AG04449 (cell line): ENCODE measurements at regions of chr19 and their contacts with region 1.

Region 1: GRCh38 chr19:12983542-12984142 is 11.6 kb upstream of the NFIX start:
- DNase-seq: no peak
- H3K4me3 ChIP-seq: peak overlapping the region; percentile 52
- CTCF ChIP-seq: peak; percentile 87

Region 2: GRCh38 chr19:13022859-13023636 is 39.4 kb after region 1 on chr19:
- CTCF ChIA-PET with region 1: interaction called, 10 read pairs
- POLR2A ChIA-PET with region 1: no interaction called
- DNase-seq: peak; percentile 88
- H3K4me3 ChIP-seq: peak overlapping the region; percentile 65
- CTCF ChIP-seq: no peak

Region 3: DNA sequence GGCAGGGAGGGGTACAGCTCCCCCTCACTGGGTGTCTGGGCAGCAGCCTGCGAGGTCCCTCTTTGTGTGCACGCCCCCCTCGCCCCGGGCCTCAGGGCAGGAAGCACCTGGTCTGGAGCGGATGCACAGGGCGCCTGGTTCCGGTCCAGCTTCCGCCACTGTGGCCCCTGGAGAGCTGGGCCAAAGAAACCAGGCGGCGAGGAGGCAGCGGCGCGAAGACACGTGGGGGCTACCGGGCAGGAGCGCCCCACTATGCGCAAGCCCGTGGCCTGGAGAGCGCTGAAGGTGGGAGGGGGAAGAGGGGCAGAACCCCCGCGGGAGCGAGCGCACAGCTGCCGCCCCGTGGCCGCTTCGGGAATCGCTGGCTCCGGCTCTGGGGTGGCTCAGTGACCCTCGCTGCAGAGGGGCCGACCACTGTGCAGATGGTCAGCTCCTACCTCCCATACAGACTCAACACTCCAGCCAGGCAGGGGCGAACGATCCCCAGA is 120.8 kb after region 1 on chr19:
- CTCF ChIA-PET with region 1: interaction called, 94 read pairs
- POLR2A ChIA-PET with region 1: no interaction called
- DNase-seq: no peak
- H3K4me3 ChIP-seq: no peak overlapping the region
- CTCF ChIP-seq: peak; percentile 80

Region 4: GRCh38 chr19:13150187-13150930 is 166.7 kb after region 1 on chr19 and contains the starts of genes IER2 and STX10:
- CTCF ChIA-PET with region 1: interaction called, 17 read pairs
- POLR2A ChIA-PET with region 1: no interaction called
- DNase-seq: no peak
- H3K4me3 ChIP-seq: peak within 1 kb of the TSS; percentile 96
- CTCF ChIP-seq: peak; percentile 68

Region 5: GRCh38 chr19:13262450-13262849 is 278.8 kb after region 1 on chr19:
- CTCF ChIA-PET with region 1: interaction called, 130 read pairs
- POLR2A ChIA-PET with region 1: no interaction called
- DNase-seq: no peak
- H3K4me3 ChIP-seq: no peak overlapping the region
- CTCF ChIP-seq: peak; percentile 48